ENCODE measurements at regions of chr9 and their contacts with region 1.

Region 1: DNA sequence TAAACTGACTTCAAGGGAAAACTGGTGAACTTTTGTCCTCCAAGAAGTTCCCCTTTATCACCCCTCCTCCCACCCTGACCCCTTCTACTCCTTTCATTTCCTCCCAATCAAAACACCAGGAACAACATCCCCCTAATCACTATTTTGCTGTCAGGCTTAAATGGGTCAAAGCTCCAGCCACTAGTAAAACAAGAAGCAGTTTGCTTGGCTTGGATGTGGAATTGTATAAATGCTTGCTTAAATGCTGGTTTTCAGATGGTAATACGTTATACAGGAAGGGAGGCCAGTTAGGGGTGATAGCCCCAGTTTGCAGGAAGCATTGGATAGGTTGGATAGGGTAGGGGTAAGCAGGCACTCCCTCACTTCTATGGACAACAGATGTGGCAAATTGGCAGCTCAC is 473.6 kb downstream of the AGTPBP1 start:
- DNase-seq: no peak
- H3K4me3 ChIP-seq: no peak overlapping the region
- H3K27ac ChIP-seq: no peak overlapping the region
- H3K4me1 ChIP-seq: no peaks in the 10 kb centered on the region
- H3K27me3 ChIP-seq: no peaks in the 10 kb centered on the region
- CTCF ChIP-seq: no peak

Region 2: GRCh38 chr9:85278769-85279168 is 10.6 kb after region 1 on chr9:
- CTCF ChIA-PET with region 1: interaction called, 20 read pairs
- dilution Hi-C with region 1: no loop called
- in situ Hi-C with region 1: no loop called
- intact Hi-C with region 1: no loop called
- DNase-seq: no peak
- H3K4me3 ChIP-seq: no peak overlapping the region
- H3K27ac ChIP-seq: no peak overlapping the region
- H3K4me1 ChIP-seq: no peaks in the 10 kb centered on the region
- H3K27me3 ChIP-seq: peaks cover 5% of the 10 kb centered on the region
- CTCF ChIP-seq: no peak

Measured in mammary epithelial cell (primary cell).